GM10248 (cell line): ENCODE measurements at regions of chr1 and their contacts with region 1.

Region 1: DNA sequence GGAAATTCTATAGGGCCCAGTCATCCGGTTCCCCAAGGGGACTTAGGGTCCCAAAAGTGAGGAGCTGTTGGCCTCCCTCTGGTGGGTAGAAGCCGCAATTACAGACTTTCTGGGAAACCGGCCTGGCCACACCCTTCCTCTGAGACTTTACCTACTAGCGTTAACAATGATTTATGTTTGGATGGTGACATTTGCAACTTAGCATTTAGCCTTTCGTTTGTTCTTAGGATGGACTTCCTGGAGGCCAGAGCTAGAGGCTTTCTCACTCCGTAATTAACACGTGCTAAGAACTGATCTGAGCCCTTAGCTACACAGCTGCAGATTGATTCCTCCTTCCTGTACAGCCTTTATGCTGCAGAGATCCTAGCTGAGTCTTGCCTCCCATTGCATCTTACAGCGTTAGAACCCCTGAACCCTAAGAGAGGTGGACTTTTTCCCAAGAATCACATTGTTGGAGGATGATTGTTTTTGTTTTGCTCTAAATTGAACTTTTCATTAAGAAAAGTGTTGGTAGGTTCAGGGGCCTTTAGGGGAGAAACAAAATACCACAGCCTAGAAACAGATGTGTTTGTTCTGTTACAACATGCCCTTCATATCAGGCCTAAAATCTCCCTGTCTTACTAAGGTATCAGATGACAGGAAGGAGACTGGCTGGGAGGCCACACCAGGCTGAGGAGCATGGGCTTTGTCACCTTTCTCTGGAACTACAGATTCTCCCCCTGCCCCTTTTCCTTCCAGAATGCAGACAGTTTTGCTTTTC is 2.0 kb downstream of the S100A11 start:
- DNase-seq: peak; percentile 70
- CTCF ChIP-seq: peak; percentile 36

Region 2: GRCh38 chr1:152013664-152014237 is 21.1 kb before region 1 on chr1:
- CTCF ChIA-PET with region 1: interaction called, 10 read pairs
- POLR2A ChIA-PET with region 1: no interaction called
- DNase-seq: peak; percentile 50
- CTCF ChIP-seq: peak; percentile 77

Region 3: DNA sequence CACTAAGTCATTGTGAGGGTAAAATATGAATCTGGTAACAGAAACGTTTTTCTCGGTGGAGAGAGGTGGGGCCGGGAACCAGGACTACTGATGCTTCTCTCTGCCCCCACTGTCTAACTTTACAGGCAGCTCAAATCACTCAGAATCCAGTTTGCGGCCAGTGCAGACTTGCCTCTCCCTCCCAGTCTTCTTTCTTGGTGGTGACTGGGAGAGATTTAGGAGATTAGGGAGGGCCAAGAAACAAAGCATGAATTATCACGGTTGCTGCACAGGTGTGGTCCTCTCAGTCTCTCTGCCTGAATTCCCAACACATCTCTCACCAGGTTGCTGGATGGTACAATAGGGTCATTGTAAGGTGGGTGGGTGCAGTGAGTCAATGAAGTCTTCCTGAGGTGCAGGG is 10.7 kb before region 1 on chr1:
- CTCF ChIA-PET with region 1: interaction called, 16 read pairs
- POLR2A ChIA-PET with region 1: no interaction called
- DNase-seq: no peak
- CTCF ChIP-seq: no peak

Region 4: GRCh38 chr1:152047730-152048402 is 13.0 kb after region 1 on chr1:
- CTCF ChIA-PET with region 1: interaction called, 42 read pairs
- POLR2A ChIA-PET with region 1: no interaction called
- DNase-seq: peak; percentile 87
- CTCF ChIP-seq: peak; percentile 65

Region 5: GRCh38 chr1:152137215-152137614 is 102.4 kb after region 1 on chr1:
- CTCF ChIA-PET with region 1: no interaction called
- POLR2A ChIA-PET with region 1: no interaction called
- DNase-seq: no peak
- CTCF ChIP-seq: no peak